Mammary epithelial cell (primary cell): ENCODE measurements at regions of chr1 and their contacts with region 1.

Region 1: DNA sequence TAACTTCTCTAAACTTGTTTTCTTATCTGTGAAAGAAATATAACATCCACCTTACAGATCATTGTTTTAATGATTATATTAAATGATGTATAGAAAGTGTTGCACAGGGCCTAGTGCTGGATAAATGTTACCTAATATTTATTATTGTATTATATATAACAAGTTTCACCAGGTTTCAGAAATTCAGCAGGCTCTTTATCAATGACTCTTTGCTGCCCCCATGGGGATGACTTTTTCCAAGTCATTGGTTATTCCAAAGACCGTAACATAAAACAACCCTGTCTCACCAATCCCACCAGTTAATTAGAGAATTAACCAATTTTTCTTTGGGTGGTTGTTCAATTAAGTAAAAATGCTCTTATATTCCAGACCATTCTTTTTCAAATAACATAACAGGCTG is 7.3 kb upstream of the DEDD start:
- DNase-seq: peak; percentile 27
- H3K4me3 ChIP-seq: no peak overlapping the region
- H3K27ac ChIP-seq: no peak overlapping the region
- H3K4me1 ChIP-seq: no peaks in the 10 kb centered on the region
- H3K27me3 ChIP-seq: no peaks in the 10 kb centered on the region
- CTCF ChIP-seq: peak; percentile 37 to 57

Region 2: GRCh38 chr1:161071886-161072371 is 67.8 kb before region 1 on chr1:
- CTCF ChIA-PET with region 1: interaction called, 9 read pairs
- dilution Hi-C with region 1: no loop called
- in situ Hi-C with region 1: no loop called
- intact Hi-C with region 1: loop called (anchors 2 kb)
- DNase-seq: no peak
- H3K4me3 ChIP-seq: no peak overlapping the region
- H3K27ac ChIP-seq: no peak overlapping the region
- H3K4me1 ChIP-seq: peaks cover 45% of the 10 kb centered on the region
- H3K27me3 ChIP-seq: no peaks in the 10 kb centered on the region
- CTCF ChIP-seq: peak; percentile 64 to 71

Region 3: GRCh38 chr1:161082991-161083742 is 56.6 kb before region 1 on chr1:
- CTCF ChIA-PET with region 1: no interaction called
- dilution Hi-C with region 1: loop called (anchors 5 kb)
- in situ Hi-C with region 1: no loop called
- intact Hi-C with region 1: no loop called
- DNase-seq: peak; percentile 98
- H3K4me3 ChIP-seq: no peak overlapping the region
- H3K27ac ChIP-seq: peak overlapping the region; percentile 86
- H3K4me1 ChIP-seq: peaks cover 56% of the 10 kb centered on the region
- H3K27me3 ChIP-seq: no peaks in the 10 kb centered on the region
- CTCF ChIP-seq: no peak

Region 4: GRCh38 chr1:161201828-161202725 is 62.3 kb after region 1 on chr1 and contains the start of gene NDUFS2:
- CTCF ChIA-PET with region 1: no interaction called
- dilution Hi-C with region 1: loop called (anchors 10 kb)
- in situ Hi-C with region 1: no loop called
- intact Hi-C with region 1: no loop called
- DNase-seq: peak; percentile 97
- H3K4me3 ChIP-seq: peak within 1 kb of the TSS; percentile 71 to 89 (median 81)
- H3K27ac ChIP-seq: peak within 1 kb of the TSS; percentile 74
- H3K4me1 ChIP-seq: peaks cover 42% of the 10 kb centered on the region
- H3K27me3 ChIP-seq: no peaks in the 10 kb centered on the region
- CTCF ChIP-seq: peak in 1 of 2 donors; percentile 20
- total RNA-seq, gene NDUFS2: 69.3 to 82.6 TPM

Region 5: DNA sequence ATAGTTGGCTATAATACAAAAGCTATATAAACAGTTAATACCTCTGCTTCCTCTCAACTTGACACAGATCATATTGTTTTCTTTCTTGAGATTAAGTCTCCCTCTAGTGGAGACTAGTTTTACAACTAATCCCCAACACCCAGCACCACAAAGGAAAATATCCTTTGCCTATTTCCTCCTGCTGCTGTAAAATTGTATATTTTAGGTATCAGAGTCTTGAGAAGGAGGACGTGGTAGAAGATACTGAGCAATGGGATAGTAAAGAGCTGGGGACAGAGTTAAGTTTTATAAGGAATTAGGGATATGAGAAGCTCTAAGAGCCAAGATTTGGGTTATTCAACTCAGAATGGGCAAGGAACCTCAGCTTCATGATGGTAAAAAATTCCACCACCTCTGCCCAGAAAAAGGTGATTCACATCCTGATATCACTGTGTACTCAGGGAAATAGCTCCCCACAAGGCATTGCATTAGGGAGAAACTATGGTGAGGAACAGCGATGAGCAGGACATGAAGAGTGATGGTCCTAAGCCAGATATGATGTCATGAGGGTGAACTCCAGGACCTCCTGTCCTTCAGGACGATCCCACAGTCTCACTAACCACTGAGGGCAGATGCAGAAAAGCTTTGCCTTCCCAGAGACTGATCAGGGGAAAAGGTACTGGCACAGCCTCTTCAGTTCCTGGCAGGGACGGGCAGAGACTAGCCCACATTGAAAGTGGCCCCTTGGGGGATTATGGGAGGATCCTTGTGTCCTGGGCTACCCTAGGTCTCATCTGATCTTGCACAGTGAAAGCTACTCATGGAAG is 242.7 kb after region 1 on chr1:
- CTCF ChIA-PET with region 1: no interaction called
- dilution Hi-C with region 1: no loop called
- in situ Hi-C with region 1: no loop called
- intact Hi-C with region 1: no loop called
- DNase-seq: peak; percentile 80
- H3K4me3 ChIP-seq: peak overlapping the region in 2 of 3 experiments; percentile 5 to 26
- H3K27ac ChIP-seq: peak overlapping the region; percentile 91
- H3K4me1 ChIP-seq: peaks cover 20% of the 10 kb centered on the region
- H3K27me3 ChIP-seq: no peaks in the 10 kb centered on the region
- CTCF ChIP-seq: peak; percentile 47 to 63